Pancreas (tissue), 10 donors: ENCODE measurements at regions of chr7 and their contacts with region 1.

Region 1: DNA sequence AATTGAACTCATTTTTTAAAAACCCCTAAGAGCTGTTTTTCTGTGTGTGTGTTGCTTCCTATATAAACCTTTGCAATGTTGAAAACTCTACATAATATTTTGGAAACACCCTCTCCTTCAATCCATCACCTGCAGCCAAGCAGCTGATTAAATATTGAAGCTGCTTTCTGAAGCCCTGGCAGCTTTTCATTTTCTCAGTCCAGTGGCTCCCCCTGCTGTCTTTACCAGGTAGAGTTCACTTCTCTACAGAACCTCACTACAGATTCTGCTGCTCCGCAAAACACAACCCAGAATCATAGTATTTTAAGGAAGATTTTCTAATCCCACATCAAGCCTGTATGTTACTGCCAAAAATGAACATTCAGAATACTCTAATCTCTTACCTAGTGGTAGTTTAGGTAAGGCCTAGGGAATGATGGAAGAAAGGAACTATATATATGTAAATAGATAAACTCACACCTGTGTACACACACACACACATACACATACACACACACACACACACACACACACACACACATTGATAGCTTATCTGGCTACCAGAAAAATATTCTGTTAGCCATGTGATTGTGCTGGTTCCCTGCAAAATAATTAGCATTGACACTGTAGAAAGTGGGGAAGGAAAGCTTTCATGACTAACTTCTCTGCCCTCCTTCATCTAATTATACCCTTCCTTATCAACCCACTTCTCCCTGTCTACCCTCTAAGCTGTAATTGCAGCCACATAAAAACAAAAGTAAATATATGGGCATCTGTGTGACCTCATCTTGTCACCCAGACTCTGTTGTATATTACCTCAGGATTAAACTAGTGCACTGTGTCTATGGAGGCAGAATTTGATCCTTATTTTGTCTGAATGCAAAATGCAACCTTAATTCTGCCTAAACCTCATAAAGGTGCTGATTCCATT is 229.5 kb upstream of the FZD1 start:
- DNase-seq: peak in 4 of 6 donors; percentile 43 to 81 (median 70)
- ATAC-seq: peak; percentile 87 to 96 (median 94)
- H3K4me3 ChIP-seq: no peak overlapping the region
- H3K27ac ChIP-seq: no peak overlapping the region
- H3K4me1 ChIP-seq: peaks cover 0 to 10% (median 9%) of the 10 kb centered on the region in 3 donors
- H3K27me3 ChIP-seq: no peaks in the 10 kb centered on the region
- CTCF ChIP-seq: peak; percentile 42 to 60 (median 48)

Region 2: DNA sequence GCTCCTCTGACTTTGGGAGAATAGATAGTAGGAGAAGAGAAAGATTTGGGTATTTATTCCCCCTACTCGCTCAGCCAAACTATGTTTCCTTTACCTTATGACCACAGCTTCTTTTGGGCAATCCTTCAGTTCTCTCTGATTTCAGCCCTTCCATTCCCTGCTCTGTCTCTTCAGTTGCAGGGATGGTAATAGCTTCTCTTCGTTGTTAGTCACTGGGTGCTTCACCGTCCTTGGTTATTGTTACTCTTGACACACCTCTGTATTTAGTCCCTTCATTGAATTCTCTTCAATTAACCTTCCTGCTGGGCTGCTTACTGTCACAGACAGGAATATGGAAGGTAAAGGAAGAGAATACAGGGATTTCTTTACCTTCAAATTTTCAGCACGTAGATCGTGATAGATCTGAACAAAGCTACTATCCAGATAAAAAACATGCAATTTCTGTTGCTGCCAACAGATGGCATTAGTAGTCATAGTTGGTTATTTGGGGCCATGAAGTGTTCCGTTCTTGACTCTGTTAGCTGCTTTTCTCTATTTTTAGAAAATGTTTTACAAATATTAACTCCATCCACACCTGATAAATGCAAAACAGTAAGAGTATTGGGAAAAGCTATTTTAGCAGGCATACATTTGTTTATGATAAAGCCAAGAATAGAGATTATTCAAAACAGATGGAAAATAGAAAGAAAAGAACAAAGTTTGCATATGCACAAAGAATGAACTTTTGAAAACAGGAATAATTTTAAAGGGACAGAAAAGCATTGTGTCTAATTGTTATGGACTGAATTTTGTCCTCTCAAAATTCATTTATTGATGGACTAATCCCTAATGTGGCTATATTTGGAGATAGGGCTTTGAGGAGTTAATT is 579.3 kb before region 1 on chr7:
- intact Hi-C with region 1: loop called in 1 of 3 experiments (anchors 10 kb)
- DNase-seq: no peak
- ATAC-seq: peak; percentile 80 to 92 (median 90)
- H3K4me3 ChIP-seq: no peak overlapping the region
- H3K27ac ChIP-seq: no peak overlapping the region
- H3K4me1 ChIP-seq: peaks cover 8 to 28% (median 10%) of the 10 kb centered on the region in 3 donors
- H3K27me3 ChIP-seq: no peaks in the 10 kb centered on the region
- CTCF ChIP-seq: peak; percentile 6 to 49 (median 43)

Region 3: GRCh38 chr7:90613088-90613498 is 421.6 kb before region 1 on chr7:
- intact Hi-C with region 1: no loop called
- DNase-seq: no peak
- ATAC-seq: peak in 3 of 4 donors; percentile 14 to 44 (median 34)
- H3K4me3 ChIP-seq: no peak overlapping the region
- H3K27ac ChIP-seq: no peak overlapping the region
- H3K4me1 ChIP-seq: no peaks in the 10 kb centered on the region
- H3K27me3 ChIP-seq: no peaks in the 10 kb centered on the region
- CTCF ChIP-seq: no peak

Region 4: GRCh38 chr7:90708841-90709317 is 325.8 kb before region 1 on chr7:
- intact Hi-C with region 1: loop called in 1 of 3 experiments (anchors 10 kb)
- DNase-seq: peak in 4 of 6 donors; percentile 58 to 71 (median 66)
- ATAC-seq: peak; percentile 87 to 91 (median 90)
- H3K4me3 ChIP-seq: peak overlapping the region in 2 of 4 donors; percentile 17 to 32
- H3K27ac ChIP-seq: peak overlapping the region in 3 of 4 donors; percentile 36 to 77 (median 72)
- H3K4me1 ChIP-seq: peaks cover 10 to 24% (median 15%) of the 10 kb centered on the region in 3 donors
- H3K27me3 ChIP-seq: no peaks in the 10 kb centered on the region
- CTCF ChIP-seq: peak; percentile 51 to 72 (median 62)